Pancreas (tissue), 10 donors: ENCODE measurements at regions of chr1 and their contacts with region 1.

Region 1: DNA sequence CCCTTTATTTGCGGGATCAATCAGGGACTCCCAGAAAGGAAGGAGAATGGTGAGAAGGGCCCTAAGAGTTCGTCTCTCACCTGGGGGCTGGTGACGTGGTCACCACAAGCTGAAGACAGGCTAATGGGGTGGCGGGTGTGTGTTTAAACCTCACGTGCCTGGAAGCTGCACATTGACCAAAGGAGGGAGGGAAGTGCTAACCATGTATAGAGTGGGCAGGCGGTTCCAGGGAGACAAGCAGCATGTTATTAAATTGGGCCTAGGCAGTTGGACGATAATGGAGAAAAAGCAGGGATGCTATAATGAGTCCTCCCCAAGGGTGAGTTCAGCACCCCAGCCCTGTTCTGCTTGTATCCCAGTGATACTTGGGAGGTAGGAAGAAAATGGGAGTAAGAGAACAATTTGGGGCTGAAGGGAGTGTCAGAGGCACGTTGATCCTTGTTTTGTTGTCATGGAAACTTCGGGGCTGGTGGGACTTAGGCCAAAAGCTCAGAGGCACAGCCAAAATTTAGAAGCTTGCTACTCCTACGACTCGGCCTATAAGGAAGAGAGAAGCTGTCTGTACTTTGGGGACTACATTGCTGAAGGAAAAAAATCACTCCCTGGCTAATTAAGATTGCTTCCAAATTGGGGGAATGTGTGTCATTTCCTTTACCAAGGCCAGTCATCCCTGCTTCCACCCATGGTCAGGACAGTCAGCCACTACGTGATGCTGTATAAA is 33.2 kb upstream of the EPHA8 start:
- DNase-seq: peak in 1 of 6 donors; percentile 33
- ATAC-seq: no peak
- H3K4me3 ChIP-seq: no peak overlapping the region
- H3K27ac ChIP-seq: no peak overlapping the region
- H3K4me1 ChIP-seq: peaks cover 35 to 51% (median 43%) of the 10 kb centered on the region in 3 donors
- H3K27me3 ChIP-seq: no peaks in the 10 kb centered on the region
- CTCF ChIP-seq: no peak

Region 2: GRCh38 chr1:22633697-22634463 is 103.8 kb after region 1 on chr1:
- intact Hi-C with region 1: loop called in 2 of 3 experiments (anchors 5 to 10 kb)
- DNase-seq: no peak
- ATAC-seq: no peak
- H3K4me3 ChIP-seq: no peak overlapping the region
- H3K27ac ChIP-seq: no peak overlapping the region
- H3K4me1 ChIP-seq: no peaks in the 10 kb centered on the region
- H3K27me3 ChIP-seq: no peaks in the 10 kb centered on the region
- CTCF ChIP-seq: no peak